Caco-2 (cell line): ENCODE measurements at regions of chr2 and their contacts with region 1.

Region 1: GRCh38 chr2:74833418-74834233 is at the start of gene HK2:
- DNase-seq: peak; percentile 87 to 91
- H3K4me3 ChIP-seq: peak within 1 kb of the TSS; percentile 80
- H3K4me3 Mint-ChIP-seq: peak within 1 kb of the TSS; percentile 92
- H3K27ac Mint-ChIP-seq: peak within 1 kb of the TSS; percentile 93
- H3K4me1 ChIP-seq: peaks cover 19% of the 10 kb centered on the region
- H3K4me1 Mint-ChIP-seq: peaks cover 33% of the 10 kb centered on the region
- H3K27me3 ChIP-seq: no peaks in the 10 kb centered on the region
- H3K27me3 Mint-ChIP-seq: no peaks in the 10 kb centered on the region
- CTCF ChIP-seq: no peak
- total RNA-seq, gene HK2: 19.9 and 22.6 TPM in 2 replicates

Region 2: GRCh38 chr2:74690571-74690970 is 143.1 kb before region 1 on chr2:
- CTCF ChIA-PET with region 1: interaction called, 6 read pairs
- POLR2A ChIA-PET with region 1: interaction called, 3 read pairs
- intact Hi-C with region 1: loop called (anchors 1 kb)
- DNase-seq: peak in 1 of 2 experiments; percentile 66
- H3K4me3 ChIP-seq: no peak overlapping the region
- H3K4me3 Mint-ChIP-seq: no peak overlapping the region
- H3K27ac Mint-ChIP-seq: no peak overlapping the region
- H3K4me1 ChIP-seq: no peaks in the 10 kb centered on the region
- H3K4me1 Mint-ChIP-seq: no peaks in the 10 kb centered on the region
- H3K27me3 ChIP-seq: no peaks in the 10 kb centered on the region
- H3K27me3 Mint-ChIP-seq: no peaks in the 10 kb centered on the region
- CTCF ChIP-seq: peak; percentile 77 to 81

Region 3: DNA sequence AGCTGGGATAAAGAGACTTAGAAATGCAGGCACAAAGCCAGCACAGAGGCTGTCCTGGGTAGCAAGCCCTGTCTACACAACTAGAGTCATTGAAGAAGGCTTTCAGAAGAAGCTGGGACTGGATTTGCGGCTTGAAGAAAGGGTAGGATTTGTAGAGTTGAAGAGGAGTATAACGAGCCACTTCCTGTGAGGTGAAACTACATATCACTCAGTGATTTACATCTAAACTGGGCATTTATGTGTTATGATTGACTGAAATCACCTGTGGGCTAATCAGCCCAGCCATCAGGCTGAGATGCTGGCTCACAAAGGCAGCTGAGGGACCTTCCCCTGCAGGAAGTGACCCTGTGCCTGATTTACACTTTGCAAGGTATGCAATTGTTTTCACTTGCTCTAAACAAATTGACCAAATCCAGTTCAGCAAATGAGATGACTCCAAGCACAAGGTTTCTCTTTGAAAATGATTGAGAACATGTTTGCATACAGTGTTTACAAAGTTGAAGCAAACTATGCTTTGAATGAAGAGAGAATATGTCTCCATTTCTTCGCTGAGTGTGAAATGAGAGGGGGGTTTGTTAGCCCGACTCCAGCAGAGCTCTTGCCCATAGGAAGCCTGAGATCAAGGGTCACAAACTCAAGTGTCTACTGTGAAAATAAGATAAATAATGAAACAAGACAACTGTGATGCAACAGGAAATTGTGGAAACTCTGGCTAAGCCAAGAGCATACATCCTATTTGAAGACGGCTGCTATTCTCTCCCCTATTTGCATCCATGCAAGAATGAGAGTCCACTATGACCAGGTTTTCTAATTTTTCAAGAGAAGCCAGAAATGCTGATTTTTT is 69.0 kb before region 1 on chr2:
- CTCF ChIA-PET with region 1: interaction called, 6 read pairs
- POLR2A ChIA-PET with region 1: no interaction called
- intact Hi-C with region 1: loop called (anchors 1 kb)
- DNase-seq: peak; percentile 51 to 79
- H3K4me3 ChIP-seq: no peak overlapping the region
- H3K4me3 Mint-ChIP-seq: no peak overlapping the region
- H3K27ac Mint-ChIP-seq: no peak overlapping the region
- H3K4me1 ChIP-seq: peaks cover 30% of the 10 kb centered on the region
- H3K4me1 Mint-ChIP-seq: peaks cover 41% of the 10 kb centered on the region
- H3K27me3 ChIP-seq: no peaks in the 10 kb centered on the region
- H3K27me3 Mint-ChIP-seq: no peaks in the 10 kb centered on the region
- CTCF ChIP-seq: no peak

Region 4: DNA sequence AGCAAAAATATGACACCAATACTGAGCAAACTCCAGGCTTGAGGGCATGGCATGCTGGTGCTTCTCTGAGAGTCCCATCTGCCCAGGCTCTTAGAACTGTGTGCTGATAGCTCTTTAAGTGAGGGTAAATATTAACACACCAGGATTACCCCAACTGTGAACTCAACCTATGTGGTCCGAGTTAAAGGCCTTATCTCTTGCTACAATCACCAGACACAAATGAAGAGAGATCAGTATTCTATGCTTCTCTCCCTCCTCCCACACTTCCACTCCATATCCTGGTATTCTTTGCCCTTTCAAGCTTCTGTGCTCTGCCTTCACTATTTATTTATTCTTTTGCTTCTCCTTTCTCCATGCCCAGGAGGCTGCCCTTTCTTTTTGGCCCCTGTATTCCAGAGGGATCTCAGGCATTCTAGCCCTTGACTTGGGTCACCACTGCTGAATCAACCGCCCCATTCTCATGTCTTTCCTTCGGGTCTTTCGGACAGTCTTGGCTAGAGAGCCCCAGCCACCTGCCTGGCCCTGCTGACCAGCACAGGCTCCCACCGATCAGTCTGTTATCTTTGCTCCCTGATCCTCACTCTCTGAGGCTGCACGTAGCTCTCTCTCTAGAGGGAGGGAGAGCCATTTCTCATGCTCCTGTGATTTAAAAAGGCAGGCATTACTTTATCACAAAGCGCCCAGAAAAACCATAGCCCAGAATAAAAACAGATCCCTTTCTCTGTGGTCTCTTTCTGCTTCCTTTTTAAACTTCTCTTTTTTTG is 16.9 kb before region 1 on chr2:
- CTCF ChIA-PET with region 1: interaction called, 6 read pairs
- POLR2A ChIA-PET with region 1: no interaction called
- intact Hi-C with region 1: loop called (anchors 1 kb)
- DNase-seq: peak; percentile 57
- H3K4me3 ChIP-seq: no peak overlapping the region; the same call in 1 of the 2 replicates
- H3K4me3 Mint-ChIP-seq: peak overlapping the region; percentile 52
- H3K27ac Mint-ChIP-seq: peak overlapping the region; percentile 37
- H3K4me1 ChIP-seq: peaks cover 55% of the 10 kb centered on the region
- H3K4me1 Mint-ChIP-seq: peaks cover 40% of the 10 kb centered on the region
- H3K27me3 ChIP-seq: no peaks in the 10 kb centered on the region
- H3K27me3 Mint-ChIP-seq: no peaks in the 10 kb centered on the region
- CTCF ChIP-seq: no peak

Region 5: GRCh38 chr2:74849228-74849892 is 15.7 kb after region 1 on chr2:
- CTCF ChIA-PET with region 1: interaction called, 10 read pairs
- POLR2A ChIA-PET with region 1: interaction called, 5 read pairs
- intact Hi-C with region 1: loop called (anchors 1 kb)
- DNase-seq: no peak
- H3K4me3 ChIP-seq: no peak overlapping the region
- H3K4me3 Mint-ChIP-seq: no peak overlapping the region
- H3K27ac Mint-ChIP-seq: no peak overlapping the region
- H3K4me1 ChIP-seq: peaks cover 56% of the 10 kb centered on the region
- H3K4me1 Mint-ChIP-seq: peaks cover 50% of the 10 kb centered on the region
- H3K27me3 ChIP-seq: no peaks in the 10 kb centered on the region
- H3K27me3 Mint-ChIP-seq: no peaks in the 10 kb centered on the region
- CTCF ChIP-seq: no peak

Region 6: DNA sequence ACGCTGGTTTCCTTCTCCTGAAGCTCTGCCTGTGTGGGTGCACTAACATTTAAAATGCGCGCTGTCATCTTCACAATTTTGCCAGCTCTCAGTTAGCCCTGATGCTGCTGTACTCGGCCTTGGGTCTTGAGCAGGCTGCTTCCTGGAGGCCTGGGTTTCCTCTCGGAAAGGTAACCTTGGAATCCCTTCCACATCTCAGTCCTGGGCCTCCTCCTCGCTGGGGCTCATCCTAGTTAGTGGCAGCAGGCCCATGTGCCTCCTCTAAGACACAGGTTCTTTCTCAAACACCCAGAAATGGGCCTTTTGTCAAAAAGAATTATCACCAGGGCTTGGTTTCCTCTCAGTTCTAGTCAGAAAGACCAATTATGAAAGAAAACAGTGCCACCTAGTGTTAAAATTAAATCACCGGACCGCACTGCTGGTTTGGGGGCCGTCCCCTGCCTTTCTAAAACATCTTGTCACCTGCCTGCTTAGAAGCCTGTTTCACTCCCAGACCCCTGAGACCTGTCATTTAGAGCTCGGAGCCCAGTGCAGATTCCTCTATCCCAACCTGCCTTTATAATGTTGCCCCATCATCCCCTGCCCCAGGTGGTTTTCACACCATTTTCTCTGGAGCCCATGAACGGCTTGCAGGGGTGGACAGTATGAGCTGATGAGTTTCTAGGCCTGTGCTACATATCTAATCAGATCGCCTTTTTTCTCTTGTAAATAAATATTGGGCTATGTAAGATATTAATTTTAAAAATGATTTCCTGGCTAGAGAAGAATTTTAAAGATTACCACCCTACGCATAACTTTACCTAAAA is 42.7 kb after region 1 on chr2:
- CTCF ChIA-PET with region 1: interaction called, 18 read pairs
- POLR2A ChIA-PET with region 1: no interaction called
- intact Hi-C with region 1: loop called (anchors 1 kb)
- DNase-seq: peak in 1 of 2 experiments; percentile 74
- H3K4me3 ChIP-seq: no peak overlapping the region
- H3K4me3 Mint-ChIP-seq: no peak overlapping the region
- H3K27ac Mint-ChIP-seq: peak overlapping the region; percentile 74
- H3K4me1 ChIP-seq: no peaks in the 10 kb centered on the region
- H3K4me1 Mint-ChIP-seq: no peaks in the 10 kb centered on the region
- H3K27me3 ChIP-seq: no peaks in the 10 kb centered on the region
- H3K27me3 Mint-ChIP-seq: no peaks in the 10 kb centered on the region
- CTCF ChIP-seq: peak; percentile 50 to 65